CD4-positive, alpha-beta T cell (primary cell): ENCODE measurements at regions of chr7 and their contacts with region 1.

Region 1: DNA sequence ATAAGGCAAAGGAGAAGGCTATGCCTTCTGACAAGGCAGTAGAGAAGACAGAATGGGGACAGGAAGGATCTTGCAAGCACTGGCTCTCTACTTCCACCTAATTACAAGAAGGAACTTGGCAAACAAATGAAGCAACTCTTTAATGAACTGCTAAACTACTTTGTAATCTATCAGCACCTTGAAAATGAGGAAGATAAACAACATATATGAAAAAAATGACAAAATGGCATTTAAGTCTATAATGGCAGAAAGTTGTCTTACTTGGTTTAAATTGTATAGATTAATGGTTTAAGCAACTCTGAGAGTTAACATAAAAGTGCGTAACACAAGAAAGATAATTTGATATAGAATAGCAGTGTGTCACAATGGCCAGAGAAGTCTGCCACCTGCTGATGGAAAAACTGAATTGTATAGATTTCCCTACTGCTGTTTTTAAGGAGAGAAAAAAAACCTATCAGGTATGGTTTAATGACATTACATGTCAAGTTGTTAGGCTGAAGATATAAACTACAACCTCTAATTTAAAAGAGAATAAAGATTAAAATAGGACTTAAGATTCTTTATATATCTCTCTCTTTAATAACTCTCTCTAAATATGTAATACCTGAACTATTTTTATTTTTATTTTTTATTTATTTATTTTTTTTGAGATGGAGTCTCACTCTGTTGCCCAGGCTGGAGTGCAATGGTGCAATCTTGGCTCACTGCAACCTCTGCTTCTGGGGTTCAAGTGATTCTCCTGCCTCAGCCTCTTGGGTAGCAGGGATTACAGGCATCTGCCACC is 11.8 kb downstream of the NT5C3A start:
- DNase-seq: peak in 6 of 14 experiments; percentile 4 to 78 (median 60)
- ATAC-seq: peak; percentile 67
- H3K4me3 ChIP-seq: no peak overlapping the region
- H3K4me3 Mint-ChIP-seq: no peak overlapping the region
- H3K27ac ChIP-seq: no peak overlapping the region
- H3K27ac Mint-ChIP-seq: peak overlapping the region; percentile 60
- H3K4me1 ChIP-seq: peaks cover 16% of the 10 kb centered on the region
- H3K4me1 Mint-ChIP-seq: peaks cover 71% of the 10 kb centered on the region
- H3K27me3 ChIP-seq: no peaks in the 10 kb centered on the region
- H3K27me3 Mint-ChIP-seq: no peaks in the 10 kb centered on the region
- CTCF ChIP-seq: peak; percentile 79

Region 2: GRCh38 chr7:32631590-32632449 is 418.9 kb before region 1 on chr7:
- CTCF ChIA-PET with region 1: no interaction called
- POLR2A ChIA-PET with region 1: no interaction called
- intact Hi-C with region 1: no loop called
- DNase-seq: no peak
- ATAC-seq: no peak
- H3K4me3 ChIP-seq: no peak overlapping the region
- H3K4me3 Mint-ChIP-seq: no peak overlapping the region
- H3K27ac ChIP-seq: no peak overlapping the region
- H3K27ac Mint-ChIP-seq: no peak overlapping the region
- H3K4me1 ChIP-seq: no peaks in the 10 kb centered on the region
- H3K4me1 Mint-ChIP-seq: no peaks in the 10 kb centered on the region
- H3K27me3 ChIP-seq: no peaks in the 10 kb centered on the region
- H3K27me3 Mint-ChIP-seq: peaks cover 5% of the 10 kb centered on the region
- CTCF ChIP-seq: no peak

Region 3: GRCh38 chr7:32761451-32762205 is 289.1 kb before region 1 on chr7:
- CTCF ChIA-PET with region 1: no interaction called
- POLR2A ChIA-PET with region 1: no interaction called
- intact Hi-C with region 1: loop called in 1 of 2 experiments (anchors 2 kb)
- DNase-seq: peak in 1 of 14 experiments; percentile 8
- ATAC-seq: no peak
- H3K4me3 ChIP-seq: no peak overlapping the region
- H3K4me3 Mint-ChIP-seq: no peak overlapping the region
- H3K27ac ChIP-seq: no peak overlapping the region
- H3K27ac Mint-ChIP-seq: no peak overlapping the region
- H3K4me1 ChIP-seq: peaks cover 3% of the 10 kb centered on the region
- H3K4me1 Mint-ChIP-seq: peaks cover 11% of the 10 kb centered on the region
- H3K27me3 ChIP-seq: peaks cover 25 to 42% of the 10 kb centered on the region in 2 experiments
- H3K27me3 Mint-ChIP-seq: peaks cover 73% of the 10 kb centered on the region
- CTCF ChIP-seq: no peak

Region 4: DNA sequence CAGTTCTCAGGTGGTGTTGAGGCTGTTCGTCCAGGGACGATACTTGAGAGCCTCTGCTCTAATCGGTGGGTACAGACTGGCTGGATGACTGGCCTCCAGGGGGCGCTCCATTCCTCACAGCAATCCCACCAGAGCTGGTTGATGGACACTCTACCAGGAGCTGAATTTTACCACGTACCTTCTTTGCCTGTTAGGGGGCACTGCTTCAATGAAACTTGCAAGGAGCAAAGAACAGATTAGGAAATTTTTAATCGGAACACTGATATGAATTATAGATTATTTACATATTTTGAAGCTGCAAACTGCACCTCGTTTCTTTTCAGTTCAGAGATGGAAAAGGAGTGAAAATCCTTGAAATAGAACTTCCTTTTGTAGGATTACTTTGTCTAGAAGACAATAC is 204.0 kb before region 1 on chr7:
- CTCF ChIA-PET with region 1: interaction called, 8 read pairs
- POLR2A ChIA-PET with region 1: no interaction called
- intact Hi-C with region 1: loop called (anchors 1 to 5 kb)
- DNase-seq: peak; percentile 84 to 97 (median 91)
- ATAC-seq: peak; percentile 100
- H3K4me3 ChIP-seq: no peak overlapping the region
- H3K4me3 Mint-ChIP-seq: no peak overlapping the region
- H3K27ac ChIP-seq: no peak overlapping the region
- H3K27ac Mint-ChIP-seq: no peak overlapping the region
- H3K4me1 ChIP-seq: peaks cover 5% of the 10 kb centered on the region
- H3K4me1 Mint-ChIP-seq: peaks cover 6% of the 10 kb centered on the region
- H3K27me3 ChIP-seq: peaks cover 3 to 4% of the 10 kb centered on the region in 2 experiments
- H3K27me3 Mint-ChIP-seq: peaks cover 28% of the 10 kb centered on the region
- CTCF ChIP-seq: peak; percentile 90

Region 5: DNA sequence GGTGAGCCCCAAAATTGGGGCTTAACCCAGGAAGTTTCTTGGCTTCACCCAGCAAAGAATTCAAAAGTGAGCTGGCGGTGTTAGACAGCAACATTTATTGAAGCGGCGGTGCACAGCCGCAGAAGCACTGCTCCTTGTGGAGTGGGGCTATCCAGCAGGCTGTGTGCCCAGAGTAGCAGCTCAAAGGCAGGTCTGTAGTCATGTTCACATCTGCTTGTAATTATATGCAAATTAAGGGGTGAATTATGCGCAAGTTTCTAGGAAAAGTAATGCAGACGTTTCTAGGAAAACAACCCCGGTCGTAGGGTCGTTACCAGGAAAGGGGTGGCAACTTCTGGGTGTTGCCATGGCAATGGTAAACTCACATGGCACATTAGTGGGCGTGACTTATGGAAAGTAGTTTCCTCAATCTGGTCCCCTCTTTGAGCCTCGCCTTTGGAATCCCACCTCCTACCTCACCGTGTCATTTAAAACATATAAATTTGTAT is 145.5 kb before region 1 on chr7:
- CTCF ChIA-PET with region 1: no interaction called
- POLR2A ChIA-PET with region 1: no interaction called
- intact Hi-C with region 1: no loop called
- DNase-seq: peak; percentile 26 to 94 (median 60)
- ATAC-seq: peak; percentile 84
- H3K4me3 ChIP-seq: peak overlapping the region; percentile 39
- H3K4me3 Mint-ChIP-seq: peak overlapping the region; percentile 78
- H3K27ac ChIP-seq: peak overlapping the region; percentile 13 to 82
- H3K27ac Mint-ChIP-seq: peak overlapping the region; percentile 81
- H3K4me1 ChIP-seq: peaks cover 25% of the 10 kb centered on the region
- H3K4me1 Mint-ChIP-seq: peaks cover 12% of the 10 kb centered on the region
- H3K27me3 ChIP-seq: no peaks in the 10 kb centered on the region
- H3K27me3 Mint-ChIP-seq: no peaks in the 10 kb centered on the region
- CTCF ChIP-seq: no peak

Region 6: GRCh38 chr7:33062782-33063443 is 12.2 kb after region 1 on chr7:
- CTCF ChIA-PET with region 1: no interaction called
- POLR2A ChIA-PET with region 1: interaction called, 26 read pairs
- intact Hi-C with region 1: no loop called
- DNase-seq: peak; percentile 83 to 98 (median 90)
- ATAC-seq: peak; percentile 90
- H3K4me3 ChIP-seq: peak overlapping the region; percentile 72
- H3K4me3 Mint-ChIP-seq: peak overlapping the region; percentile 98
- H3K27ac ChIP-seq: peak overlapping the region; percentile 75 to 89
- H3K27ac Mint-ChIP-seq: peak overlapping the region; percentile 95
- H3K4me1 ChIP-seq: peaks cover 25% of the 10 kb centered on the region
- H3K4me1 Mint-ChIP-seq: peaks cover 48% of the 10 kb centered on the region
- H3K27me3 ChIP-seq: no peaks in the 10 kb centered on the region
- H3K27me3 Mint-ChIP-seq: no peaks in the 10 kb centered on the region
- CTCF ChIP-seq: no peak

Region 7: GRCh38 chr7:33325754-33326484 is 275.2 kb after region 1 on chr7:
- CTCF ChIA-PET with region 1: no interaction called
- POLR2A ChIA-PET with region 1: no interaction called
- intact Hi-C with region 1: no loop called
- DNase-seq: no peak
- ATAC-seq: no peak
- H3K4me3 ChIP-seq: no peak overlapping the region
- H3K4me3 Mint-ChIP-seq: no peak overlapping the region
- H3K27ac ChIP-seq: no peak overlapping the region
- H3K27ac Mint-ChIP-seq: no peak overlapping the region
- H3K4me1 ChIP-seq: no peaks in the 10 kb centered on the region
- H3K4me1 Mint-ChIP-seq: no peaks in the 10 kb centered on the region
- H3K27me3 ChIP-seq: no peaks in the 10 kb centered on the region
- H3K27me3 Mint-ChIP-seq: no peaks in the 10 kb centered on the region
- CTCF ChIP-seq: no peak